ENCODE measurements at regions of chr3 and their contacts with region 1.

Region 1: GRCh38 chr3:88412346-88412745 is 262.6 kb downstream of the C3orf38 start:
- DNase-seq: no peak
- H3K4me3 ChIP-seq: no peak overlapping the region
- H3K27ac ChIP-seq: no peak overlapping the region
- H3K4me1 ChIP-seq: no peaks in the 10 kb centered on the region
- H3K27me3 ChIP-seq: no peaks in the 10 kb centered on the region
- CTCF ChIP-seq: no peak
- EP300 ChIP-seq: no peak
- POLR2A ChIP-seq: no peak

Region 2: GRCh38 chr3:88385090-88385489 is 27.3 kb before region 1 on chr3:
- in situ Hi-C with region 1: no loop called
- intact Hi-C with region 1: loop called (anchors 1 kb)
- DNase-seq: no peak
- H3K4me3 ChIP-seq: no peak overlapping the region
- H3K27ac ChIP-seq: no peak overlapping the region
- H3K4me1 ChIP-seq: no peaks in the 10 kb centered on the region
- H3K27me3 ChIP-seq: no peaks in the 10 kb centered on the region
- CTCF ChIP-seq: no peak
- EP300 ChIP-seq: no peak
- POLR2A ChIP-seq: no peak